HepG2 (cell line): ENCODE measurements at regions of chr2 and their contacts with region 1.

Region 1: GRCh38 chr2:158753641-158754611 is 41.2 kb upstream of the DAPL1 start:
- DNase-seq: peak; percentile 62
- ATAC-seq: peak; percentile 96
- H3K4me3 ChIP-seq: peak overlapping the region; percentile 17 to 47 (median 35); a peak in 4 of 6 replicates
- H3K27ac ChIP-seq: no peak overlapping the region
- H3K4me1 ChIP-seq: peaks cover 7% of the 10 kb centered on the region; the same call in 1 of the 2 replicates
- H3K27me3 ChIP-seq: peaks cover 0 to 16% of the 10 kb centered on the region in 2 experiments; a peak in 3 of 5 replicates
- CTCF ChIP-seq: peak; percentile 94
- EP300 ChIP-seq: no peak
- POLR2A ChIP-seq: no peak
- RAD21 ChIP-seq: peak; percentile 76; the same call in 1 of the 2 replicates

Region 2: GRCh38 chr2:157777427-157777826 is 976.5 kb before region 1 on chr2:
- CTCF ChIA-PET with region 1: no interaction called
- POLR2A ChIA-PET with region 1: no interaction called
- in situ Hi-C with region 1: no loop called
- intact Hi-C with region 1: loop called (anchors 10 kb)
- DNase-seq: peak; percentile 55
- ATAC-seq: peak; percentile 37; the same call in 1 of the 3 replicates
- H3K4me3 ChIP-seq: no peak overlapping the region
- H3K27ac ChIP-seq: no peak overlapping the region
- H3K4me1 ChIP-seq: peaks cover 12% of the 10 kb centered on the region
- H3K27me3 ChIP-seq: no peaks in the 10 kb centered on the region
- CTCF ChIP-seq: peak; percentile 65
- EP300 ChIP-seq: no peak
- POLR2A ChIP-seq: no peak
- RAD21 ChIP-seq: peak; percentile 78

Region 3: GRCh38 chr2:158024288-158024898 is 729.5 kb before region 1 on chr2:
- CTCF ChIA-PET with region 1: interaction called, 12 read pairs
- POLR2A ChIA-PET with region 1: no interaction called
- in situ Hi-C with region 1: no loop called
- intact Hi-C with region 1: loop called (anchors 1 kb)
- DNase-seq: peak; percentile 29
- ATAC-seq: peak; percentile 77
- H3K4me3 ChIP-seq: no peak overlapping the region
- H3K27ac ChIP-seq: no peak overlapping the region
- H3K4me1 ChIP-seq: peaks cover 22% of the 10 kb centered on the region
- H3K27me3 ChIP-seq: 0 out of 5 replicates have a peak, but pooled peaks cover 1 to 6% of the 10 kb centered on the region in 2 experiments
- CTCF ChIP-seq: peak; percentile 86
- EP300 ChIP-seq: no peak
- POLR2A ChIP-seq: no peak
- RAD21 ChIP-seq: peak; percentile 76

Region 4: GRCh38 chr2:158034199-158034866 is 719.6 kb before region 1 on chr2:
- CTCF ChIA-PET with region 1: interaction called, 7 read pairs
- POLR2A ChIA-PET with region 1: no interaction called
- in situ Hi-C with region 1: loop called (anchors 5 kb)
- intact Hi-C with region 1: loop called (anchors 1 kb)
- DNase-seq: peak; percentile 74
- ATAC-seq: peak; percentile 96
- H3K4me3 ChIP-seq: no peak overlapping the region
- H3K27ac ChIP-seq: no peak overlapping the region
- H3K4me1 ChIP-seq: no peaks in the 10 kb centered on the region
- H3K27me3 ChIP-seq: peaks cover 0 to 17% of the 10 kb centered on the region in 2 experiments; a peak in 2 of 5 replicates
- CTCF ChIP-seq: peak; percentile 89
- EP300 ChIP-seq: no peak
- POLR2A ChIP-seq: no peak
- RAD21 ChIP-seq: peak; percentile 70

Region 5: DNA sequence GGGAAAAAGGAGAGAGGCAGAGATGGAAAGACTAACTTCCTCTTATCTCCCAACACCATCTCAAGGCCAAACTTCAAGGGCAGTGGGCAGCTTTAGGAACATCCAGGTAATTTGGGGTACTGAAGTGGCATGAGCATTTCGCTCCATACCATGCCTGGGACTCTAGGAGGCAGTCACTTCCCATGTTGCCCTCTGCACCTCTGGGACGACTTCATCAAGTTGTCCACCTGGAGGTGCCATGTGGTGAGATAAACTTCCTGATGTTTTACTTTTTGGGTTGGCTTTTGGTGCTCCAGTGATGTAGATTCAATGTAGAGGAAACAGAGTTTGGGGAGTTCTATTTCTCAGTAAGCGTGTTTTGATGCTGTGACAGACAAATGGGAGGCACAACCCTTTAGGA is 708.6 kb before region 1 on chr2:
- CTCF ChIA-PET with region 1: no interaction called
- POLR2A ChIA-PET with region 1: no interaction called
- in situ Hi-C with region 1: no loop called
- intact Hi-C with region 1: loop called (anchors 5 kb)
- DNase-seq: peak; percentile 68
- ATAC-seq: peak; percentile 99
- H3K4me3 ChIP-seq: no peak overlapping the region
- H3K27ac ChIP-seq: no peak overlapping the region
- H3K4me1 ChIP-seq: peaks cover 19% of the 10 kb centered on the region
- H3K27me3 ChIP-seq: peaks cover 0 to 16% of the 10 kb centered on the region in 2 experiments; a peak in 2 of 5 replicates
- CTCF ChIP-seq: peak; percentile 90
- EP300 ChIP-seq: no peak
- POLR2A ChIP-seq: no peak
- RAD21 ChIP-seq: peak; percentile 91